CD4-positive, alpha-beta memory T cell (primary cell): ENCODE measurements at regions of chr1 and their contacts with region 1.

Region 1: GRCh38 chr1:31422505-31423319 is 9.7 kb downstream of the SERINC2 start:
- DNase-seq: peak; percentile 37 to 57 (median 39)
- H3K4me3 ChIP-seq: no peak overlapping the region
- H3K4me3 Mint-ChIP-seq: no peak overlapping the region
- H3K27ac ChIP-seq: no peak overlapping the region
- H3K27ac Mint-ChIP-seq: peak overlapping the region in 1 of 7 donors; percentile 82
- H3K4me1 ChIP-seq: peaks cover 3% of the 10 kb centered on the region
- H3K4me1 Mint-ChIP-seq: peaks cover 0 to 7% (median 2%) of the 10 kb centered on the region in 4 donors
- H3K27me3 ChIP-seq: no peaks in the 10 kb centered on the region
- H3K27me3 Mint-ChIP-seq: peaks cover 13 to 27% of the 10 kb centered on the region in 2 donors

Region 2: GRCh38 chr1:31166462-31166861 is 256.2 kb before region 1 on chr1:
- CTCF ChIA-PET with region 1: interaction called, 7 read pairs
- POLR2A ChIA-PET with region 1: no interaction called
- intact Hi-C with region 1: loop called (anchors 1 kb)
- DNase-seq: no peak
- H3K4me3 ChIP-seq: no peak overlapping the region
- H3K4me3 Mint-ChIP-seq: no peak overlapping the region
- H3K27ac ChIP-seq: no peak overlapping the region
- H3K27ac Mint-ChIP-seq: no peak overlapping the region
- H3K4me1 ChIP-seq: peaks cover 4% of the 10 kb centered on the region
- H3K4me1 Mint-ChIP-seq: peaks cover 0 to 11% (median 2%) of the 10 kb centered on the region in 4 donors
- H3K27me3 ChIP-seq: no peaks in the 10 kb centered on the region
- H3K27me3 Mint-ChIP-seq: peaks cover 4 to 7% of the 10 kb centered on the region in 2 donors

Region 3: GRCh38 chr1:31182352-31182751 is 240.4 kb before region 1 on chr1:
- CTCF ChIA-PET with region 1: interaction called, 21 read pairs
- POLR2A ChIA-PET with region 1: no interaction called
- intact Hi-C with region 1: loop called (anchors 1 kb)
- DNase-seq: peak in 4 of 5 donors; percentile 22 to 34 (median 28)
- H3K4me3 ChIP-seq: no peak overlapping the region
- H3K4me3 Mint-ChIP-seq: no peak overlapping the region
- H3K27ac ChIP-seq: no peak overlapping the region
- H3K27ac Mint-ChIP-seq: no peak overlapping the region
- H3K4me1 ChIP-seq: no peaks in the 10 kb centered on the region
- H3K4me1 Mint-ChIP-seq: peaks cover 2 to 13% (median 7%) of the 10 kb centered on the region in 4 donors
- H3K27me3 ChIP-seq: peaks cover 14% of the 10 kb centered on the region
- H3K27me3 Mint-ChIP-seq: peaks cover 26 to 38% of the 10 kb centered on the region in 2 donors

Region 4: DNA sequence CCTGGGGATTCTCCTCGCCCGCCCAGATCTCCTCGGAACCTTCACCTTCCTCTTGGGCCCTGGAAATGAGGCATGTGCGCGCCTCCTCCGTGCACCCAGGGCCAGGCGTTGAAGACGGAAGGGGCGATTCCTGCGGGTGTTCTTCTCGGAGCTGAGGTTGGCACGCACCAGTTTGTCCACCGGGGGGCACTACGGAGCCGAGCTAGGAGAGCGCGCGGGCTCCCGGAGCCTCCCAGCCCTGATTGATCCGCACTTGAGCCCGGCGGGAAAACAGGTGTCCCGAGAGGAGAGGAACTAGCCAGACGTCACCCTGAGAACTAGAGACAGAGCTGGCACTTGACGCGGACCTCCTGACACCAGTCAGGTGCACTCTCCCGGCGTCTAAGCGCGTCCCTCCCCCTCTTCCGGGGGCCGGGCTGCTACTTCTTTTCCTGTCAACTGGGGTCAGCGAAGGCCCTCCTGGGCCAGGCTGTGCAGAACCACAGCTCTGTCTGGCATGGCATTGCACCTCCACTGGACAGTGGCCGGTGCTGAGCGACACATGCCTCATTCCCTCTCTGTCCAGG is 28.0 kb before region 1 on chr1:
- CTCF ChIA-PET with region 1: interaction called, 60 read pairs
- POLR2A ChIA-PET with region 1: no interaction called
- intact Hi-C with region 1: loop called (anchors 1 kb)
- DNase-seq: peak; percentile 63 to 69 (median 65)
- H3K4me3 ChIP-seq: peak overlapping the region; percentile 47 to 62
- H3K4me3 Mint-ChIP-seq: peak overlapping the region; percentile 81 to 90 (median 85)
- H3K27ac ChIP-seq: no peak overlapping the region
- H3K27ac Mint-ChIP-seq: peak overlapping the region in 5 of 7 donors; percentile 22 to 64 (median 50)
- H3K4me1 ChIP-seq: peaks cover 10% of the 10 kb centered on the region
- H3K4me1 Mint-ChIP-seq: peaks cover 4 to 15% (median 10%) of the 10 kb centered on the region in 4 donors
- H3K27me3 ChIP-seq: no peaks in the 10 kb centered on the region
- H3K27me3 Mint-ChIP-seq: peaks cover 0 to 7% of the 10 kb centered on the region in 2 donors